ENCODE measurements at regions of chr2 and their contacts with region 1.

Region 1: DNA sequence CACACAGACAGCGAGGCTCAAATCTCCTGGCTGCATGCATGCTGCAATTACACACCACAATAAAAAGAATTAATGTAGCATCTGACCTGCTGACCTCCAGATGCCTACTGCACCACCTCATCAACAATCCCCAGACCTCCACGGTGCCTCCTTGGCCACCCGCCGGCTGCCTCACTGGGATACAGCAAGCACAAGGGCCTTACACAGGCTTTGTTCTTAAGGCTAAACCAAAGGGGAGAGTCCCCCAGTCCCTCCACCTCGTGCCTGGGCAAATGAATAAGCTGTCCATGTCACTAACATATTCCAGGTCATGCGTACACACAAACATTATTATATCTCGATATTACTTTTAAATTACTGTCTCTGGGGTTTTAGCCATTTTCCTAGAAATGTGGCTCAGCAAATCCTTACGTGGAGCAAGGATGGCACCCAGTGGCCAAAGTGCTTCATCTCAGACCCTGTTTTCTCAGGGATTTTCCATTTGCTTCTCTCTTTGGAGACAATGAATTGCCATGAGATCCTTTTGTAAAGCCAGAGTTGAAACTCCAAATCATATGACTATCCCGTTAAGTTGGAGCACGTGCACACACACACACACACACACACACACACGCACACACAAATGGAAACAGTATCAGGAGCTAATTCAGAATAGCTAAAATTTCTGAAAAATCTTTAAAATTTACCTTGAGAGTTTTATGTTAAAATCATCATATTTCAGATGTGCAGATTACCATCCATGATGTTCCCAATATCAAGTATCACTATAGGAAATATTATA is 313.8 kb downstream of the PDE11A start:
- DNase-seq: peak in 1 of 2 experiments; percentile 53
- H3K4me3 ChIP-seq: no peak overlapping the region
- H3K27ac ChIP-seq: no peak overlapping the region
- H3K4me1 ChIP-seq: no peaks in the 10 kb centered on the region
- H3K27me3 ChIP-seq: no peaks in the 10 kb centered on the region
- CTCF ChIP-seq: peak; percentile 76

Region 2: GRCh38 chr2:177419274-177419673 is 339.5 kb before region 1 on chr2:
- CTCF ChIA-PET with region 1: no interaction called
- POLR2A ChIA-PET with region 1: no interaction called
- intact Hi-C with region 1: loop called (anchors 5 kb)
- DNase-seq: no peak
- H3K4me3 ChIP-seq: no peak overlapping the region
- H3K27ac ChIP-seq: peak overlapping the region; percentile 43
- H3K4me1 ChIP-seq: peaks cover 11% of the 10 kb centered on the region
- H3K27me3 ChIP-seq: no peaks in the 10 kb centered on the region
- CTCF ChIP-seq: no peak

Region 3: GRCh38 chr2:177772529-177772928 is 13.7 kb after region 1 on chr2:
- CTCF ChIA-PET with region 1: no interaction called
- POLR2A ChIA-PET with region 1: no interaction called
- intact Hi-C with region 1: no loop called
- DNase-seq: no peak
- H3K4me3 ChIP-seq: no peak overlapping the region
- H3K27ac ChIP-seq: no peak overlapping the region
- H3K4me1 ChIP-seq: no peaks in the 10 kb centered on the region
- H3K27me3 ChIP-seq: no peaks in the 10 kb centered on the region
- CTCF ChIP-seq: peak; percentile 85

Region 4: DNA sequence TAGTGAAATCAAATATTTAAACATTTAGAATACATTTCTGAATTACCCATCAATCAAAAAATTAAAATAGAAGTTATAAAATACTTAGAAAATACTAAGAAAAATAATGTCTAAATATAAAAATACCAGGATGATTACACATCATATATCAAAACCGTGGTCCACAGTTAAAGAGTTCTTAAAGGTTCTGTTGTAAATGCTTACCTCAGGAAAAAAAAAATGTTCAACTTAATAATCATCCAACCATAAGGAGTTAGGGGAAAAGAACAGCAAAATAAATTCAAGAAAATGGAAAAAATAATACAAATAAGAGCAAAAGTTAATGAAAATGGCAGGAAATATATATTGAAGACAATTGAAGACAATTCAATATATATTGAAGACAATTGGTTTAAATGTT is 270.6 kb after region 1 on chr2:
- CTCF ChIA-PET with region 1: no interaction called
- POLR2A ChIA-PET with region 1: interaction called, 20 read pairs
- intact Hi-C with region 1: no loop called
- DNase-seq: no peak
- H3K4me3 ChIP-seq: no peak overlapping the region
- H3K27ac ChIP-seq: no peak overlapping the region
- H3K4me1 ChIP-seq: no peaks in the 10 kb centered on the region
- H3K27me3 ChIP-seq: no peaks in the 10 kb centered on the region
- CTCF ChIP-seq: no peak